ENCODE measurements at regions of chr13 and their contacts with region 1.

Region 1: GRCh38 chr13:40992678-40993518 is 26.2 kb downstream of the ELF1 start:
- DNase-seq: no peak
- H3K4me3 ChIP-seq: no peak overlapping the region
- H3K4me3 Mint-ChIP-seq: no peak overlapping the region
- H3K27ac Mint-ChIP-seq: peak overlapping the region; percentile 91
- H3K4me1 ChIP-seq: peaks cover 44% of the 10 kb centered on the region
- H3K4me1 Mint-ChIP-seq: peaks cover 31% of the 10 kb centered on the region
- H3K27me3 ChIP-seq: no peaks in the 10 kb centered on the region
- H3K27me3 Mint-ChIP-seq: no peaks in the 10 kb centered on the region
- CTCF ChIP-seq: no peak

Region 2: DNA sequence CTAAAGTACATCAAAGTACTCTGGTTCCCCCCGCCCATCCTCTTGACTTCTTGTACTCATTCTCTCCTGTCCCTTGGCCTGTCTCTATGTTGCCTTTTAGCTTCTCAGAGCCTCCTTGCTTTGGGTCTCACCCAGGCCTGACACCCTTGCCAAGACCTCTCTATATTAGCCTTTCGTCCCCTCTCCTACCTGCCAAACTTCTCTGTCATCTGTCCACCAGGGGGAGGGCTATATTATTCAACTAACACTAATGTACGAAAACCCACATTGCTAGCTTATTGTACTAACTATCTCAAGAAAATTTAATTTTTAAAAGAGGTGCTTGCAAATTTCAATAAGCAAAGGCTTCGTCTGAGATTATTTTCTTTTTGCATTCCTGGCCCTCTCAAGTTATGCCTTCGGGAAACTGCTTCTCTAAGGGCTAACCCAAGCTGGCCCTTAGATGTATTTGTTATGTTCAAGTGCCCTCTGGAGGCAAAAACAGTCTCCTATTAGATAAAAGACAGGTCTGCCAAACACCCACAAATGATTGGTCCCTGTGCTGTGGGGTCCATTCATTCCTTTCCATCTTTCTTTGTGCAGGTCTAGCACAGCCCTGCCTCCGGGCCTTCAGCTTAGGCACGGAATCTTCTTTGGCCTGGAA is 215.6 kb before region 1 on chr13:
- CTCF ChIA-PET with region 1: no interaction called
- POLR2A ChIA-PET with region 1: no interaction called
- intact Hi-C with region 1: loop called (anchors 5 kb)
- DNase-seq: peak in 1 of 2 experiments; percentile 73
- H3K4me3 ChIP-seq: peak overlapping the region; percentile 28
- H3K4me3 Mint-ChIP-seq: peak overlapping the region; percentile 39
- H3K27ac Mint-ChIP-seq: no peak overlapping the region
- H3K4me1 ChIP-seq: peaks cover 19% of the 10 kb centered on the region
- H3K4me1 Mint-ChIP-seq: peaks cover 13% of the 10 kb centered on the region
- H3K27me3 ChIP-seq: no peaks in the 10 kb centered on the region
- H3K27me3 Mint-ChIP-seq: no peaks in the 10 kb centered on the region
- CTCF ChIP-seq: peak; percentile 82 to 92

Region 3: DNA sequence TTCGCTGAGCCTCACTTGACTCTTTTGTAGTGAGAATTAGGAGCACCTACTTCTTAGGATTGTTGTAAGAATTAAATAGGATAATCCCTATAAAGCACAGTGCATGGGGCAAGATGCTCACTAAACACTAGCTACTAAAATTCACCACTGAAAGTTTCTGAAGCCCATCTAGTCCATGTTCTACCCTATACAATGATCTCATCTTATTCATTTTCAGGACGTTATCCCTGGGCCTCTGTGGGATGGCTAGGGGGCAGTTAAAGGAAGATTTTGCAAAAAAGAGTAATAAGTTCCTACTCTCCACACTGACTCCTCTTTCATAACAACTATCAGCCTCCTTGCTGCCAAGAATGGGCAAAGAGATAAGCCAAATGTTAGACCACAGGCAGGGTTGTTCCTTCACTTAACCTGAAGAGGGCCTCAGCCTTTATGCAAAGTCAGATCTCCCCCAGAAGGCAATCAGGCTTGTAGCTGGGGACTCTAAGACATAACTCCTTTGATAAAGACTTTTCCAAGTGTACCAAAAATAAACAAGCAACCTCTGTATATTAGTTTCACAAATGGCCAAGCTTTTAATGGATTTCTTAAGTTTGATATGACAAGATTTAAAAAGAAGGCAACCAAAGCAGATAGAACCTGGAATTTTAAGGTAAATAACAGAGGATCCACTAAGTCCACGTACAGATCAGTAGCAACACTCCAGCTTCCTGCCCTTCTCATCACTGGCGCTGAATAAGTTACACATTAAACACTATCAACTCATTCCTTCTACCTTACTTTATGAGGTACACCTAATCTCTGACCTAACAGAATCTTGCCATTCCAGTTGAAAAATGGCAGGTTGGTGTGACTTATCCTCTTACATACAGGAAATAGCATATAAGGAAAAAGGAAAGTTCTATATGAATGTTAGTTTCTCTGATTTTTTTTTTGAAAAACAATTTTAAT is 18.2 kb before region 1 on chr13:
- CTCF ChIA-PET with region 1: interaction called, 3 read pairs
- POLR2A ChIA-PET with region 1: no interaction called
- intact Hi-C with region 1: loop called (anchors 1 kb)
- DNase-seq: peak; percentile 70 to 71
- H3K4me3 ChIP-seq: no peak overlapping the region
- H3K4me3 Mint-ChIP-seq: peak overlapping the region; percentile 47
- H3K27ac Mint-ChIP-seq: peak overlapping the region; percentile 69
- H3K4me1 ChIP-seq: peaks cover 70% of the 10 kb centered on the region
- H3K4me1 Mint-ChIP-seq: peaks cover 63% of the 10 kb centered on the region
- H3K27me3 ChIP-seq: no peaks in the 10 kb centered on the region
- H3K27me3 Mint-ChIP-seq: no peaks in the 10 kb centered on the region
- CTCF ChIP-seq: peak; percentile 65 to 67

Region 4: GRCh38 chr13:41004875-41005693 is 12.2 kb after region 1 on chr13:
- CTCF ChIA-PET with region 1: no interaction called
- POLR2A ChIA-PET with region 1: no interaction called
- intact Hi-C with region 1: loop called (anchors 1 kb)
- DNase-seq: no peak
- H3K4me3 ChIP-seq: no peak overlapping the region
- H3K4me3 Mint-ChIP-seq: peak overlapping the region; percentile 39
- H3K27ac Mint-ChIP-seq: peak overlapping the region; percentile 11
- H3K4me1 ChIP-seq: peaks cover 64% of the 10 kb centered on the region
- H3K4me1 Mint-ChIP-seq: peaks cover 47% of the 10 kb centered on the region
- H3K27me3 ChIP-seq: no peaks in the 10 kb centered on the region
- H3K27me3 Mint-ChIP-seq: no peaks in the 10 kb centered on the region
- CTCF ChIP-seq: no peak

Region 5: GRCh38 chr13:41019011-41019487 is 26.2 kb after region 1 on chr13 and contains the start of gene ELF1:
- CTCF ChIA-PET with region 1: interaction called, 3 read pairs
- POLR2A ChIA-PET with region 1: no interaction called
- intact Hi-C with region 1: loop called (anchors 1 kb)
- DNase-seq: peak; percentile 70 to 71
- H3K4me3 ChIP-seq: peak within 1 kb of the TSS; percentile 26
- H3K4me3 Mint-ChIP-seq: peak within 1 kb of the TSS; percentile 75
- H3K27ac Mint-ChIP-seq: peak within 1 kb of the TSS; percentile 88
- H3K4me1 ChIP-seq: peaks cover 57% of the 10 kb centered on the region
- H3K4me1 Mint-ChIP-seq: peaks cover 53% of the 10 kb centered on the region
- H3K27me3 ChIP-seq: no peaks in the 10 kb centered on the region
- H3K27me3 Mint-ChIP-seq: no peaks in the 10 kb centered on the region
- CTCF ChIP-seq: no peak
- total RNA-seq, gene ELF1: 108 and 116 TPM in 2 replicates

Region 6: GRCh38 chr13:41040606-41041319 is 47.9 kb after region 1 on chr13:
- CTCF ChIA-PET with region 1: no interaction called
- POLR2A ChIA-PET with region 1: no interaction called
- intact Hi-C with region 1: no loop called
- DNase-seq: no peak
- H3K4me3 ChIP-seq: no peak overlapping the region
- H3K4me3 Mint-ChIP-seq: no peak overlapping the region
- H3K27ac Mint-ChIP-seq: no peak overlapping the region
- H3K4me1 ChIP-seq: no peaks in the 10 kb centered on the region
- H3K4me1 Mint-ChIP-seq: peaks cover 6% of the 10 kb centered on the region
- H3K27me3 ChIP-seq: no peaks in the 10 kb centered on the region
- H3K27me3 Mint-ChIP-seq: no peaks in the 10 kb centered on the region
- CTCF ChIP-seq: no peak

Region 7: DNA sequence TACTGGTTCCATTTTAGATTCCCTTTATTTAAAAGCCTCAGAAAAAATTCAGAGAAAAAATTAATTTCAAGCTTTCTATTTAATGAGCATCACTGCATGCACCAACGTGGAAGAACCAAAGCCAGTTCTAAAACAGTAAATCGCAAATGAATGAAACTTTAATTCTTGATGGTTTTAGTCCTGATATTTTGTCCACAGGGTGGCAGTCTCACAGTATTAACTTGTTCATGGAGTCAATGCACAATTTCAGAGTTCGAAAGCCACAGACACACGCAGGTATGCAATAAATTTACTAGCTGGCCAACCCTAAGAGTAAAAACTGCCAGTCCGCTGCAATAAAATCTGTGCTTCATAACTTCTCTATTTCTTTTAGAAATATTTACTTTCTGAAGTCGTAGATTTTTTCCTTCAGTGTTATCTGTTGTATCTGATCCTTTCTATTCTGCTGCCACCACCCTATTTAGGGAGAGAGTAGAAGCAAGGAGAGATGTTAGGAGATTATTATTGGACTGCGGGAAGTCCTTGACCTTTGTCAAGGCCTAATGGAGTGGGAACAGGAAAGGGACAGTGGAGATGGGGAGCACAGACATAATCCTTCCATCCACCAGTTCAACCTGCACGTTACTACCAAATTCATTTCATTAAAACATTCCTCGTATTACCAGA is 61.4 kb after region 1 on chr13:
- CTCF ChIA-PET with region 1: interaction called, 3 read pairs
- POLR2A ChIA-PET with region 1: no interaction called
- intact Hi-C with region 1: loop called (anchors 1 kb)
- DNase-seq: peak; percentile 46 to 57
- H3K4me3 ChIP-seq: no peak overlapping the region
- H3K4me3 Mint-ChIP-seq: no peak overlapping the region
- H3K27ac Mint-ChIP-seq: peak overlapping the region; percentile 47
- H3K4me1 ChIP-seq: peaks cover 43% of the 10 kb centered on the region
- H3K4me1 Mint-ChIP-seq: peaks cover 47% of the 10 kb centered on the region
- H3K27me3 ChIP-seq: no peaks in the 10 kb centered on the region
- H3K27me3 Mint-ChIP-seq: no peaks in the 10 kb centered on the region
- CTCF ChIP-seq: peak; percentile 51 to 66

Region 8: DNA sequence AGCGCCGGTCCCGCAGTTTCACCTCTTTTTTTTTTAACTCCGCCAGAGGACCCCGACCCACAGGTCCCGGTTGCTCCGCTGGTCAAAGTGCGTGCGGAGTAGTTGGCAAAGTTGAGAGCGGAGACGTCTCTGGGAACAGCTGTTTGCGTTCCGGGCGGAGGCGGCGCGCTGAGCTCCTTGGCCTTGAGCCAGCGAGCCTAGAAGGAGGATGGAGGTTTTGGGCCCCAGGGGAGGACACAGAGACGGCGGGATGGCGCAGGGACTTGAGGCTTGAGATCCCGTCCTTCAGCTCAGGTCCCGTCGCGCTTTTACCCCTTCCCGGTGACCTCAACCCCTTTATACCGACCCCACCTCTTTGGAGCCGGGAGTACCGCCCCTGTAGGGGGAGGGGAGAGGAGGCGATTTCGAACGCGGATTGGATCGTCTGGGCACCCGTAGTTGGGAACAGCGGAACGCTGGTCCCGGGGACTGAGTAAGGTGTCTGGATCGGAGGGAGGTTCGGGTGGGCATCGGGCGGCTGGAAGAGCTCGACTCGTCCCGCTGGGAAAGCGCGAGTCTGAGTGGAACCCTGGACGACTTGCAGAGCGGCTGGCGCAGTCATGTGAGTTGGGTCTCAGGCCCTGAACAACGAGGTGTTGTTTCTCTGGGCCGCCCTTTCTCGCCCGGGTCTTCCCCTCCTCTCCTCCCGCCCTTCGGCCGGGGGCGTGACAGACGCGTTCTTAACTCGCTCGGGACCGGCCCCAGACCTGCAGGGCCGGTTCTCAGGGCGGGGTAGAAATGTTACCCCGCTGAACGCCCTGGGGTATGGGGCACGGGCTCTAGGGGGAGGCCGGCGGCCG is 68.4 kb after region 1 on chr13 and contains the start of gene WBP4:
- CTCF ChIA-PET with region 1: no interaction called
- POLR2A ChIA-PET with region 1: no interaction called
- intact Hi-C with region 1: loop called (anchors 1 kb)
- DNase-seq: peak; percentile 97 to 99
- H3K4me3 ChIP-seq: peak within 1 kb of the TSS; percentile 76
- H3K4me3 Mint-ChIP-seq: peak within 1 kb of the TSS; percentile 95
- H3K27ac Mint-ChIP-seq: peak within 1 kb of the TSS; percentile 99
- H3K4me1 ChIP-seq: peaks cover 56% of the 10 kb centered on the region
- H3K4me1 Mint-ChIP-seq: peaks cover 43% of the 10 kb centered on the region
- H3K27me3 ChIP-seq: no peaks in the 10 kb centered on the region
- H3K27me3 Mint-ChIP-seq: no peaks in the 10 kb centered on the region
- CTCF ChIP-seq: no peak
- total RNA-seq, gene WBP4: 12.9 and 13.6 TPM in 2 replicates

Measured in Caco-2 (cell line).